ENCODE measurements at regions of chr1 and their contacts with region 1.

Region 1: DNA sequence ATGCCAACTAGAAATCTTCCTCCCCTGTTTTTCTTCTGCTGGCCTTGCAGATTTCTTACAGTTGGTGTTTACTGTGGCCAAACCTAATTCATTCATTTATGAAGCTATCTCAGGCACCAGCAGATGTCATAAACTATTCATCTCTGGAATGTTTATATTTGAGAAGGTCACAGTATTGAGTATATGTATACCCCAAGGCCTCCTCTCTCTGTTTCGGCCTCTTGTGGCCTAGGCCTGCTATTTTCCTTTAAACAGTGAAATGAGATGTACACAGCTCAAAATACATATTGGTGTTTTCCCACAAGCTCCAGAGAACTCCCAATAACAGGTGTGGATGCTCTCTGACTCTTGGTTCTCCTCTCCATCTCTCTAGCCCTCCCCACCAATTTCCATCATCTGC is 520.7 kb upstream of the CAMK1G start:
- DNase-seq: no peak
- H3K4me3 Mint-ChIP-seq: no peak overlapping the region
- H3K27ac Mint-ChIP-seq: no peak overlapping the region
- H3K4me1 Mint-ChIP-seq: no peaks in the 10 kb centered on the region
- H3K27me3 Mint-ChIP-seq: no peaks in the 10 kb centered on the region

Region 2: DNA sequence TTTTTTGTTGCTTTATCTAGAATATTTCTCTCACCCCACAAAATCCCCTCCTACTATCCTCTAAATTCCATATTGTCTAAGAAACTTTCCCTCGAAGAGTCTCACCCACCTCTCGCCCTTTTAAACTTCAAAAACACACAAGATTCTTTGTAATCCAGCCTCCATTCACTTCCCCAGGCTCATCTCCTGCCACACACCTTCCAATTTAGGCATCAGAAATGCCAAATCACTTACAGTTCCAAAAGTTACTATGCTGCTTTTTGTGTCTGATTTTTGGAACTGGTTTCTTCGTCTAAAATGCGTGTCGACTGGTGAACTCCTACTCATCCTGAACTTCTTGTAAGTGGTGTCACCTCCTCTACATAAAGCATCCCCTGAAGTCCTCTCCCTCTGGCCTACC is 38.2 kb after region 1 on chr1:
- CTCF ChIA-PET with region 1: no interaction called
- intact Hi-C with region 1: loop called (anchors 1 kb)
- DNase-seq: no peak
- H3K4me3 Mint-ChIP-seq: no peak overlapping the region
- H3K27ac Mint-ChIP-seq: no peak overlapping the region
- H3K4me1 Mint-ChIP-seq: no peaks in the 10 kb centered on the region
- H3K27me3 Mint-ChIP-seq: peaks cover 3% of the 10 kb centered on the region

Measured in activated naive CD4-positive, alpha-beta T cell treated with anti-CD3 and anti-CD28 coated beads for 36 hours (primary cell).